Activated CD8-positive, alpha-beta T cell treated with anti-CD3 and anti-CD28 coated beads, Interleukin-2, amount 10 ng/mL, durations not matched to agents 7 days and 5 days (primary cell): ENCODE measurements at regions of chr2 and their contacts with region 1.

Region 1: GRCh38 chr2:27428213-27428977 is at the start of gene NRBP1:
- DNase-seq: peak; percentile 93
- ATAC-seq: peak; percentile 92
- H3K4me3 Mint-ChIP-seq: peak within 1 kb of the TSS; percentile 99
- H3K27ac Mint-ChIP-seq: peak within 1 kb of the TSS; percentile 98
- H3K4me1 Mint-ChIP-seq: peaks cover 31% of the 10 kb centered on the region
- H3K27me3 Mint-ChIP-seq: no peaks in the 10 kb centered on the region
- total RNA-seq, gene NRBP1: 91.2 to 91.3 TPM

Region 2: DNA sequence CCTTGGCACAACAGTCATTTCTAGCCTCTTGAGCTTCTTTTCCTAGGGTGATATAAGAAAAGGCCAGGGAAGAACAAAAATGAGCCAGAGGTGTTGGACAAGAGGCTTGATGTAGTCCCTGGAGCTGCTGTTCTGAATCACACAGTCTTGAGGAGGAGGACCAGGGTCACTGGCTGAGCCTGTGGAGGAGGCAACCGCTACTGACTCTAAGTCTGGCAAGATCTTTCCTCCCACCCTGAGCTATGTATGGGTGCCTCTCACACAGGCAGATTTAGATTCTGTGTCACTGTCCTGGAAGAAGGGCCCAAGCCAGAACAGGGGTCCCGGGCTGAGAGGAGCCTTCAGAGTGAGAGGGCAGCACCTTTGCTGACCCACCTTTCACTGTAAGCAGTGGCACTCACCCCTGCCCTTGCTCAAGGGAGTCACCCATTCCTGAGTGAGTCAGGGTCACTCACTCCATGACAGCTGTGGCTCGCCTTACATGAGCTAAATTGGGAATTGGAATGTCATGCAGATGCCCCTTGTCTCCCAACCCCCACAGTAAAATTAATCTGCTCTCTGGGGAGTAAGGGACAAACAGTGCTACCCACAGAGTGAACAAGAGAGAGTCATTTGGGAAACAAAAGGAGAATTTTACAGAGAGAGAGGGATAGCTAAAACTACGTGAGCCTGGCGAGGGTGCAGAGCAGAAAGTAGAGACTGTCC is 146.4 kb before region 1 on chr2 and contains the start of gene TRIM54:
- CTCF ChIA-PET with region 1: no interaction called
- POLR2A ChIA-PET with region 1: no interaction called
- DNase-seq: no peak
- ATAC-seq: no peak
- H3K4me3 Mint-ChIP-seq: no peak within 1 kb of the TSS
- H3K27ac Mint-ChIP-seq: no peak within 1 kb of the TSS
- H3K4me1 Mint-ChIP-seq: peaks cover 6% of the 10 kb centered on the region
- H3K27me3 Mint-ChIP-seq: peaks cover 45% of the 10 kb centered on the region
- total RNA-seq, gene TRIM54: 0.26 to 0.31 TPM

Region 3: DNA sequence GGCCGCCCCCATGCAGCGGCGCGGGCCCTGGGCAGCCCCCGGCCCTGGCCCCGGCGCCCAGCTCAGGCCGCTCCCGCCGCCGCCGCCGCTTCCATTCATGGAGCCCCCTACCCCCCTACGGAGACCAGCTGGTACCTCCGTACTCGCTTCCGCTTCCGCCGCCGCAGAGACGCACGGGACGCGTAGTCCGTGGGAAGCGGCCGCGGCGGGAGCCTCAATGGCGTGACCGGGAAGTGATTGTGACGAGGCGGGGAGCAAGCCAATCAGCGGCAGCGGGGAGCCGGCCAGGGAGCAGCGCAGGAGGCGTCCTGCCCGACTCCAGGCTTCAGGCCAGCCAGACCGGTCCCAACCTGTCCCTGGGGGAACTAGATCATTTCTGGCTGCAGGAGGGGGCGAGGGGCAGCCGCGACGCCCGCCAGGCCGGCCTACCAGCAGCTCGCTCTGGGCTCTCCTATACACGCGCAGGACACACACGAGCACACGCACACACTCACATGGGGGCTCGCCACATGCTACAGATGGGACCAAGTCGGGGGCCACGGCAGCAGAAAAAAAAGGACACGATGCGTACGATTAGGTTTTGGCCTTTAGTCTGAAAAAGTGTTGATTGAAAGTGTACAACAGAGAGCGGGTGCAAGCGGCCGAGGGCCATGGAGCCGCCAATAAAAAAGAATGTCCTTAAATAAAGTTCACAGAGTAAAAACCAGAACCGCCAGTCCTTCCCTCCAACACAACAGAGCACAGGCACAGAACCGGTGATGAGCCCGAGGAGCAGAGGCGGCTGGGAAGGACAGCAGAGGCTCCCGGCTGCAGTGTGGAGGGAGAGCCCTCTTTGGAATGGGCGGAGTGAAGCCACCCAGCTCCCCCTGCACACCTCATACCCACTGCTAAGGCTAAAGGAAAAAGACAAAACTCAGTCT is 47.5 kb before region 1 on chr2 and contains the start of gene ZNF513:
- CTCF ChIA-PET with region 1: interaction called, 9 read pairs
- POLR2A ChIA-PET with region 1: interaction called, 22 read pairs
- DNase-seq: peak; percentile 90
- ATAC-seq: peak; percentile 85
- H3K4me3 Mint-ChIP-seq: peak within 1 kb of the TSS; percentile 90
- H3K27ac Mint-ChIP-seq: peak within 1 kb of the TSS; percentile 97
- H3K4me1 Mint-ChIP-seq: peaks cover 33% of the 10 kb centered on the region
- H3K27me3 Mint-ChIP-seq: no peaks in the 10 kb centered on the region
- total RNA-seq, gene ZNF513: 11.8 to 13.3 TPM

Region 4: DNA sequence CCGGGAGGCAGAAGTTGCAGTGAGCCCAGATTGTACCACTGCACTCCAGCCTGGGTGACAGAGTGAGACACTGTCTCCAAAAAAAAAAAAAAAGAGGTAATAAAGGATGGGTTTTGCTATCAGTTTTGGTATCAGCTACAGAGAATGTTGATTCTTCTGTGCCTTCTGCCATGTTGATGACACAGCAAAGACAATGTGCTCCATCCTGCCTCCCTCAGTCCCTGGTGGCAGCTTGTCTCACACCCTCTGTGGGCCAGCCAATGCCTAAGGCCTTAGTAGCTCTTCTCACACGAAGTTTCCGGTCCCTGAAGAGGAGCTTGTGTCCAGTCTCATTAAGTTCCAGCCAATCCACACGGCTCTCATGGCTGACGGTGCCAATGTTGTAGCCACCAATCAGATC is 43.6 kb after region 1 on chr2:
- CTCF ChIA-PET with region 1: no interaction called
- POLR2A ChIA-PET with region 1: no interaction called
- DNase-seq: no peak
- ATAC-seq: no peak
- H3K4me3 Mint-ChIP-seq: no peak overlapping the region
- H3K27ac Mint-ChIP-seq: no peak overlapping the region
- H3K4me1 Mint-ChIP-seq: no peaks in the 10 kb centered on the region
- H3K27me3 Mint-ChIP-seq: no peaks in the 10 kb centered on the region